Natural killer cell (primary cell): ENCODE measurements at regions of chr12 and their contacts with region 1.

Region 1: DNA sequence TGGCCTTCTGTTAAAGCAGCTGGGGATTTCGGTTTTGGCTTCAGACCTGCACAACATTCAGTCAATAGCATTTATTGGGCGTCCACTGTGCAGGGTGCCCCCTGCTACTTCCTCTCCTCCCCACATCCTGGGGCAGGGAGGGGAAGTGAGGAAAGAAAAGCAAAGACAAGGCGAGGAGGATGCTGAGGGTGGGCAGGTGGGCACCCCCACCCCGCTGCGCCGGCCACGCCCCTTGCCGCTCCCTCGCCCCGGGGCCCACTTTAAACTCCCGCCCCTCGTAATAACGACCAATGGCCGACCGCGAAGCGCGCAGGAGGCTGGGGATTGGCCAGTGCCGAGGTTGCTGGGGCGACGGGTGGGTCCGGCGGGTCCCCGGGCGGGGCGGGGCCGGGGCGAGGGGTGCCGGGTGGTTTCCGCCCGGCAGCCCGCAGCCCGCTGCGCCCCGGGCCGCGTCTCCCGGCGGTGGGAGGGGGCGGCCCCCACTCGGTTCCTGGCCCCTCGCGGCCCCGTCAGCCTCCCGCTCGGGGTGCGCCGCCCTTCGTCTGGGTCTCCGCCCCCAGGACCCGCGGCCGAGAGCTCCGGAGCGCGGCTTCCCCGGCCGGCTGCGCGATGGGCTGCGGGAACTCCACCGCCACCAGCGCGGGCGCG is at the start of gene C12orf75:
- DNase-seq: peak; percentile 83 to 91
- ATAC-seq: peak; percentile 75 to 88 (median 85)
- H3K4me3 ChIP-seq: peak within 1 kb of the TSS; percentile 53
- H3K4me3 Mint-ChIP-seq: peak within 1 kb of the TSS; percentile 92
- H3K27ac ChIP-seq: peak within 1 kb of the TSS; percentile 76
- H3K27ac Mint-ChIP-seq: peak within 1 kb of the TSS; percentile 89 to 96
- H3K4me1 ChIP-seq: peaks cover 60% of the 10 kb centered on the region
- H3K4me1 Mint-ChIP-seq: peaks cover 83 to 85% of the 10 kb centered on the region in 2 donors
- H3K27me3 ChIP-seq: no peaks in the 10 kb centered on the region
- H3K27me3 Mint-ChIP-seq: no peaks in the 10 kb centered on the region
- CTCF ChIP-seq: no peak
- total RNA-seq, gene C12orf75: 121 to 131 (median 128) TPM

Region 2: DNA sequence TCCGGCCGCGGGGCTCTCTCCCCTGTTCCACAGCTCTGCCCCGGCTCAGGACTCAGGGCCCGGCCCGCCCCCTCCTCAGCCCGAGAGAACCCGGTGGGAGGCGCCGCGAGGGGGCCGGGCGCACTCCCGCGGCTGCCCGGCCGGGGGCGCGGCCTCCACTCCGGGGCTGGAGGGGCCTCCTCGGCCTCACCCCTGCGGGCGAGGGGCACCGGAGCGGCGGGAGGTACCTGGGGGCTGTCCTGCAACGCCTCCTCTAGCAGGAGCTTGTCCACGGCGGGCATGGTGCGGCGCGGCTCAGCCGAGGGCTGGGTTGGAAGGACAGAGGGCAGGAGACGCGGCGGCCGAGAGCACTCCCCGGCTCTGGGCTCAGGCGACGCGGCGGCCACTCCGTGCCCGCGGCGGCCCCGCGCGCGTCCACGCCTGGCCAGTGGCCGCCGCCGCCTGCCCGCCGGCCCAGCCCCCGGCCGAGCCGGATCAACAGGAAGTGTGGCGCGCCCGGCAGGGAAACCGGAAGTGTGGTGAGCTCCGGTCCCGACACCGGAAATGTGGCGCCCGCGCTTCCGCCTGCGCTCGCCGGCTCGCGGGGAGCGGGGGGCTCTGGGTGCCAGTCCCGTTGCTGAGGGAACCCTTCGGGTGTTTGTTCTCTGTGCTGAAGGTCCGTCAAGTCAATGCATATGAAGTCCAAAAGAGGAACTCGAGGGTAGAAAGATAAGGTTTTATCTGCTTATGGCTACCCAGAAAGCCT is 94.5 kb before region 1 on chr12 and contains the start of gene APPL2:
- intact Hi-C with region 1: loop called (anchors 5 kb)
- DNase-seq: peak; percentile 68 to 90
- ATAC-seq: peak; percentile 81 to 85 (median 85)
- H3K4me3 ChIP-seq: peak within 1 kb of the TSS; percentile 57
- H3K4me3 Mint-ChIP-seq: peak within 1 kb of the TSS; percentile 93
- H3K27ac ChIP-seq: peak within 1 kb of the TSS; percentile 72
- H3K27ac Mint-ChIP-seq: peak within 1 kb of the TSS; percentile 85 to 86
- H3K4me1 ChIP-seq: peaks cover 15% of the 10 kb centered on the region
- H3K4me1 Mint-ChIP-seq: peaks cover 41 to 43% of the 10 kb centered on the region in 2 donors
- H3K27me3 ChIP-seq: no peaks in the 10 kb centered on the region
- H3K27me3 Mint-ChIP-seq: no peaks in the 10 kb centered on the region
- CTCF ChIP-seq: peak; percentile 39
- total RNA-seq, gene APPL2: 56.0 to 65.9 (median 64.2) TPM

Region 3: GRCh38 chr12:105279460-105280056 is 50.8 kb before region 1 on chr12:
- intact Hi-C with region 1: loop called (anchors 2 kb)
- DNase-seq: peak; percentile 25 to 67
- ATAC-seq: peak; percentile 59 to 80 (median 80)
- H3K4me3 ChIP-seq: no peak overlapping the region
- H3K4me3 Mint-ChIP-seq: no peak overlapping the region
- H3K27ac ChIP-seq: no peak overlapping the region
- H3K27ac Mint-ChIP-seq: no peak overlapping the region
- H3K4me1 ChIP-seq: no peaks in the 10 kb centered on the region
- H3K4me1 Mint-ChIP-seq: peaks cover 0 to 10% of the 10 kb centered on the region in 2 donors
- H3K27me3 ChIP-seq: no peaks in the 10 kb centered on the region
- H3K27me3 Mint-ChIP-seq: peaks cover 10 to 13% of the 10 kb centered on the region in 2 donors
- CTCF ChIP-seq: peak; percentile 70

Region 4: GRCh38 chr12:105401198-105401597 is 70.8 kb after region 1 on chr12:
- intact Hi-C with region 1: no loop called
- DNase-seq: no peak
- ATAC-seq: no peak
- H3K4me3 ChIP-seq: no peak overlapping the region
- H3K4me3 Mint-ChIP-seq: no peak overlapping the region
- H3K27ac ChIP-seq: no peak overlapping the region
- H3K27ac Mint-ChIP-seq: no peak overlapping the region
- H3K4me1 ChIP-seq: no peaks in the 10 kb centered on the region
- H3K4me1 Mint-ChIP-seq: peaks cover 0 to 10% of the 10 kb centered on the region in 2 donors
- H3K27me3 ChIP-seq: no peaks in the 10 kb centered on the region
- H3K27me3 Mint-ChIP-seq: no peaks in the 10 kb centered on the region
- CTCF ChIP-seq: no peak